Naive thymus-derived CD4-positive, alpha-beta T cell (primary cell): ENCODE measurements at regions of chr22 and their contacts with region 1.

Region 1: DNA sequence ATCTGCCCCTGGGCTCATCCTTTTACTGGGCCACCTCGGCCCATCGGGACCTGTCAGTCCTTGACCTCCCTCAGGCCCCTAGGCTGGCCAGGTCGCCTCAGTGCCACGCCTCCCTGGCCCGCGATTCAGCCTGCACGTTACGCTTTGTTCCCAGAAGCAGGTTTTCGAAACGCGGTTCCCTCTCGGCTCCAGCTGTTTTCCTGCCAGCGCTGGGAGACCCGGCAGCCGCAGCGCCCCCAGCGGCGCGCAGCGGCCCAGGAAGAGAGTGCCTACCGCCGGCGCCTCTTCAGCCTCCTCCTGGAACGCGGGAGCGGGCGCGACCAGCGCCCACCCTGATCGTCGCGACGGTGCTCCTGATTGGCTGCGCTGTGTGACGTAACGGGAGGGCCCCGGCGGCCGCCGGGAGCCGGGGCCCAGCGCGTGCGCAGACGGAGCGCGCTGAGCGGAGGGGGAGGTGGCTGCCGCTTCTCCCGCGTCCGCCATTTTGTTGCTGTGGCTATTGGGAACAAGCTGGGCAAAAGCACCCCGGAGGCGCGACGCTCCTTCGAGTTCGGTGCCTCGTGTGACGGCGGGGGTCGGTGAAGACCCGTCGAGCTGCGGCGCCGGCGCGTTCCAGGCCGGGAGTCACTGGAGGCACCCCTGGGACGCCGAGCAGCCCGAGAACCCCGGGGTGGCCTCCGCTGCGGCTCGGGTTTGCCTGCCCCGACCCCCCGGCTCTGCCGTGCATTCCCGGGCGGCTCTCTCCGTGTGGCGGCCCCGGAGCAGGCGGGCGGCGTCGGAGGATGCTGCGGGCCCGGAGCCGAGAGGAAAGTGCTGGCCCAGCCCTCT is at the start of gene CRKL:
- DNase-seq: peak; percentile 92 to 96 (median 94)
- ATAC-seq: peak; percentile 98
- H3K4me3 ChIP-seq: peak within 1 kb of the TSS; percentile 87
- H3K4me3 Mint-ChIP-seq: peak within 1 kb of the TSS; percentile 83 to 99 (median 97)
- H3K27ac ChIP-seq: peak within 1 kb of the TSS; percentile 92
- H3K27ac Mint-ChIP-seq: peak within 1 kb of the TSS; percentile 77 to 97 (median 90)
- H3K4me1 ChIP-seq: peaks cover 4 to 12% of the 10 kb centered on the region in 2 donors
- H3K4me1 Mint-ChIP-seq: peaks cover 32 to 50% (median 40%) of the 10 kb centered on the region in 7 donors
- H3K27me3 ChIP-seq: no peaks in the 10 kb centered on the region
- H3K27me3 Mint-ChIP-seq: no peaks in the 10 kb centered on the region
- total RNA-seq, gene CRKL: 38.9 to 82.7 (median 77.8) TPM

Region 2: DNA sequence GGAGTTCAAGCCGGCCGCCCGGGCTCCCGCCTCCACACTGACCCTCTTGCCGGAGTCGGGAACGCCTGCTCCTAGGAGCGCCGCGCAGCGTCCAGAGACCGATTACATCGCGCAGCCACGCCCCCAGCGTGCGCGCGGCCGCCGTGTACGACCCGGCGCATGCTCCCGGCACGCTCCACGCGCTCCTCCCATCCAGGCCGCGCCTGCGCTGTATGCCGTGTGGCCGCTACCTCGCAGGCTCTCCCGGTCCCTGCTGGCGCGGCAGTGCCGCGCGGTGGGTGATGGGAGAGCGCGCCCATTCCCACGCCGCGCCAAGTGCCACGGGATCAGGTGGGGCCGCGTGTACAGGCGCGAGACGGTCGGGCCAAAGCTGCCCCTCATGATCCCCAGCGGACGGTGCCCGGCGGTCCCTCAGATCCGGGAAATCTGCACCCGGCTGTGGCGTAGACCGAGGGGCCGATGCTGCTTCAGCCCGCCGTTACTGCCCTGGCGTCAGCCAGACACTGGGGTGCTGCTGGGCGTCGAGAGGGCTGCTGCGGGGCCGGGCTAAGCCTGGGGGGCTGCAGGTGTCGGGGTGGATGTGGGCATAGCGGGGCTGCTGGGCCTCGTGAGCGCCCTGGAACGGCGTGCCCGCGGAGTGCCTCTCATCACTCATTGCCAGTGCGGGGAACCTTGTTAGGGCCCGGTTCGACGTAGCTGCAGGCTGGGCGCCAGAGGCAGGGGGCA is 1062.3 kb before region 1 on chr22 and contains the starts of genes GNB1L and RTL10:
- CTCF ChIA-PET with region 1: no interaction called
- POLR2A ChIA-PET with region 1: no interaction called
- intact Hi-C with region 1: loop called in 1 of 2 experiments (anchors 10 kb)
- DNase-seq: peak; percentile 91 to 97 (median 94)
- ATAC-seq: peak; percentile 97
- H3K4me3 ChIP-seq: peak within 1 kb of the TSS; percentile 64
- H3K4me3 Mint-ChIP-seq: peak within 1 kb of the TSS; percentile 94 to 99 (median 96)
- H3K27ac ChIP-seq: peak within 1 kb of the TSS; percentile 87
- H3K27ac Mint-ChIP-seq: peak within 1 kb of the TSS; percentile 90 to 96 (median 93)
- H3K4me1 ChIP-seq: peaks cover 19 to 21% of the 10 kb centered on the region in 2 donors
- H3K4me1 Mint-ChIP-seq: peaks cover 38 to 78% (median 65%) of the 10 kb centered on the region in 7 donors
- H3K27me3 ChIP-seq: no peaks in the 10 kb centered on the region
- H3K27me3 Mint-ChIP-seq: no peaks in the 10 kb centered on the region
- total RNA-seq, gene GNB1L: 4.2 to 14.1 (median 9.5) TPM
- total RNA-seq, gene RTL10: 18.2 to 36.8 (median 24.9) TPM

Region 3: GRCh38 chr22:20858615-20859416 is 58.4 kb before region 1 on chr22 and contains the starts of genes PI4KA and SNAP29:
- CTCF ChIA-PET with region 1: no interaction called
- POLR2A ChIA-PET with region 1: interaction called, 3 read pairs
- intact Hi-C with region 1: loop called (anchors 1 kb)
- DNase-seq: peak; percentile 92 to 98 (median 96)
- ATAC-seq: peak; percentile 97
- H3K4me3 ChIP-seq: peak within 1 kb of the TSS; percentile 78
- H3K4me3 Mint-ChIP-seq: peak within 1 kb of the TSS; percentile 87 to 95 (median 92)
- H3K27ac ChIP-seq: peak within 1 kb of the TSS; percentile 87
- H3K27ac Mint-ChIP-seq: peak within 1 kb of the TSS; percentile 60 to 92 (median 88)
- H3K4me1 ChIP-seq: peaks cover 17 to 20% of the 10 kb centered on the region in 2 donors
- H3K4me1 Mint-ChIP-seq: peaks cover 38 to 76% (median 58%) of the 10 kb centered on the region in 7 donors
- H3K27me3 ChIP-seq: no peaks in the 10 kb centered on the region
- H3K27me3 Mint-ChIP-seq: no peaks in the 10 kb centered on the region
- total RNA-seq, gene PI4KA: 120 to 181 (median 168) TPM
- total RNA-seq, gene SNAP29: 15.2 to 32.8 (median 25.4) TPM

Region 4: DNA sequence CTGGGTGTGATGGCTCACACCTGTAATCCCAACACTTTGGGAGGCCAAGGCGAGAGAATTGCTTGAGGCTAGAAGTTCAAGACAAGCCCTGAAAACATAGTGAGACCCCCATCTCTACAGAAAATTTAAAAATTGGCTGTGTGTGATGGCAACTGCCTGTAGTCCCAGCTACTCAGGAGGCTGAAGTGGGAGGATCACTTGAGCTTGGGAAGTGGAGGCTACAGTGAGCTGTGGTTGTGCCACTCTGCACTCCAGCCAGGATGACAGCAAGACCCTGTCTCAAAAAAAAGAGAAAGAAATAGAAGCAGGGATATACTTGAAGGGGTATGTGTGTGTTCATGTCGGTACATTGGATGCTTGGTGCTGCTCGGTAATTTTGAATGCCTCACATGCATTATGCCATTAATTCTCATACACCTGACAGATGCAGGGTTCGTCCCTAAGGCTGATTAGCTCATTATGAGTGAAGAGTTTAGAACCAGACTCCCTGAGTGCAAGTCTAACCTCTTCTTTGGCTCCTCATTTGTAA is 14.0 kb after region 1 on chr22:
- CTCF ChIA-PET with region 1: interaction called, 4 read pairs
- POLR2A ChIA-PET with region 1: interaction called, 4 read pairs
- intact Hi-C with region 1: loop called in 1 of 2 experiments (anchors 2 kb)
- DNase-seq: no peak
- ATAC-seq: no peak
- H3K4me3 ChIP-seq: no peak overlapping the region
- H3K4me3 Mint-ChIP-seq: peak overlapping the region in 3 of 10 donors; percentile 5 to 23 (median 18)
- H3K27ac ChIP-seq: no peak overlapping the region
- H3K27ac Mint-ChIP-seq: peak overlapping the region in 1 of 9 donors; percentile 56
- H3K4me1 ChIP-seq: peaks cover 9 to 11% of the 10 kb centered on the region in 2 donors
- H3K4me1 Mint-ChIP-seq: peaks cover 31 to 78% (median 54%) of the 10 kb centered on the region in 7 donors
- H3K27me3 ChIP-seq: no peaks in the 10 kb centered on the region
- H3K27me3 Mint-ChIP-seq: no peaks in the 10 kb centered on the region

Region 5: GRCh38 chr22:20957316-20958101 is 40.3 kb after region 1 on chr22:
- CTCF ChIA-PET with region 1: no interaction called
- POLR2A ChIA-PET with region 1: no interaction called
- intact Hi-C with region 1: no loop called
- DNase-seq: no peak
- ATAC-seq: peak; percentile 55
- H3K4me3 ChIP-seq: no peak overlapping the region
- H3K4me3 Mint-ChIP-seq: peak overlapping the region; percentile 21 to 73 (median 58)
- H3K27ac ChIP-seq: no peak overlapping the region
- H3K27ac Mint-ChIP-seq: no peak overlapping the region
- H3K4me1 ChIP-seq: peaks cover 3 to 6% of the 10 kb centered on the region in 2 donors
- H3K4me1 Mint-ChIP-seq: peaks cover 0 to 16% (median 13%) of the 10 kb centered on the region in 7 donors
- H3K27me3 ChIP-seq: peaks cover 0 to 9% of the 10 kb centered on the region in 2 donors
- H3K27me3 Mint-ChIP-seq: peaks cover 18 to 27% (median 20%) of the 10 kb centered on the region in 5 donors

Region 6: DNA sequence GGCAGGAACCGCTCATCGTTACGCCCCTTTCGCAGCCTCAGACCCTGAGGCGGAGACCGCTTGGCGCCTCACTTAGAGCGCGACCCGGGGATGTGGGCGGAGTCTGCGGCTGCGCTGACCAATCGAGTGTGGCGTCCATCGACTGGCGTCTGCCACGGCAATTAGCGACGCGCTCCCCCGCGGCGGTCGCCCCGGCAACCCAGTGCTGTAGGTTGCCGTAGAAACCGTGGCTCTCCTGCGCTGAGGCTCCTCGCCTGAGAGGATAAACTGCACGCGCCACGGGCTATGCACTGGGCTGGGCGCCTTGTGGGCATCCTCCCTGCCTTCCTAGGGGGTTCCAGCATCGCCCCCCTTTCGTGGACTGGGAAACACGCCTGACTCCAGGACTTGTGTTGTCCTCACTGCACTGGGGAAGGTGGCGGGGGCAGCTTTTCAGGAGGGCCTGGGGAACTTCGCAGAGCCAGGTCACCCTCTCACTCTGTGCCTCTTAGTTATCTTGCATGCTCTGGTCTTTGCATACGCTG is 97.1 kb after region 1 on chr22:
- CTCF ChIA-PET with region 1: no interaction called
- POLR2A ChIA-PET with region 1: no interaction called
- intact Hi-C with region 1: loop called in 1 of 2 experiments (anchors 1 kb)
- DNase-seq: peak; percentile 62 to 83 (median 70)
- ATAC-seq: peak; percentile 93
- H3K4me3 ChIP-seq: peak overlapping the region; percentile 68
- H3K4me3 Mint-ChIP-seq: peak overlapping the region; percentile 82 to 89 (median 85)
- H3K27ac ChIP-seq: peak overlapping the region; percentile 59
- H3K27ac Mint-ChIP-seq: peak overlapping the region; percentile 73 to 96 (median 89)
- H3K4me1 ChIP-seq: peaks cover 13 to 17% of the 10 kb centered on the region in 2 donors
- H3K4me1 Mint-ChIP-seq: peaks cover 17 to 36% (median 29%) of the 10 kb centered on the region in 7 donors
- H3K27me3 ChIP-seq: no peaks in the 10 kb centered on the region
- H3K27me3 Mint-ChIP-seq: peaks cover 0 to 21% (median 0%) of the 10 kb centered on the region in 5 donors